Activated CD4-positive, alpha-beta T cell treated with anti-CD3 and anti-CD28 coated beads for 36 hours (primary cell): ENCODE measurements at regions of chr14 and their contacts with region 1.

Region 1: GRCh38 chr14:63388763-63389431 is 70.2 kb upstream of the GPHB5 start:
- DNase-seq: peak; percentile 79
- ATAC-seq: peak; percentile 91
- H3K4me3 Mint-ChIP-seq: no peak overlapping the region
- H3K27ac Mint-ChIP-seq: no peak overlapping the region
- H3K4me1 Mint-ChIP-seq: peaks cover under 1% of the 10 kb centered on the region
- H3K27me3 Mint-ChIP-seq: no peaks in the 10 kb centered on the region

Region 2: DNA sequence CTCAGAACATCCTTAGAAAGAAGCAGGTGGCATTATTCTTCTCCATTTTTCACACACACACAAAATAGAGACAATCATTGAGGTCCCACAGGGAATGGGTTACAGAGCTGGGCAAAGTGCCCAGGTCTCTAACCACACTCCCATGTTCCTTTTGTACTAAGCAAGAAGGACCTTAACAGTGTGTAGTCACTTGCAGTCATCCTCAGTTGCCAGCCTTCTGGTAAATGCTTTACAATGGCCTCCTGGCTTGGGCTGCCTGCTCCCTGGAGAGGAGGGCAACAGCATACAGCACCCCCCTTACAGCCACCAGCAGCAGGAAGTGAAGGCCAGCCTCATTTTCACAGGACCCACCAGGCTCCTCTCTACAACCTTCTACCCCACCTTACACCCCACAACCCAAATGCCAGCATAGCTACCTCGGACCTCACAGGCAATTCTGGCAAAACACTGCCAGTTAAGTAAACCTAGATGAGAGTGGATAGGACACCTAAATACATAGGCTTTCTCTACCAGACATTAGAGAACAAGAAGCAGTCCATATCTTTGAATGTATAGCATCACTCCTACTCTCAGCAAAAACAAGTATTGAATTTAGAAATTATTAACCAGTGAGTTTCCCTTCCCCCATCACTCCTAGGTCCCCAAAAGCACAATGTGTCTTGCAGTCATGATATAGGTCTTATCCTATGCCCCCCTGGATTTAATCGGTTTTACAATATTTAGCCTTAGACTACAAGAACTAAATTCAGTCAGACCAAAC is 66.1 kb after region 1 on chr14:
- CTCF ChIA-PET with region 1: no interaction called
- POLR2A ChIA-PET with region 1: no interaction called
- intact Hi-C with region 1: no loop called
- DNase-seq: peak; percentile 8
- ATAC-seq: no peak
- H3K4me3 Mint-ChIP-seq: no peak overlapping the region
- H3K27ac Mint-ChIP-seq: no peak overlapping the region
- H3K4me1 Mint-ChIP-seq: peaks cover 19% of the 10 kb centered on the region
- H3K27me3 Mint-ChIP-seq: no peaks in the 10 kb centered on the region

Region 3: GRCh38 chr14:63543000-63543825 is 154.3 kb after region 1 on chr14 and contains the start of gene PPP2R5E:
- CTCF ChIA-PET with region 1: interaction called, 11 read pairs
- POLR2A ChIA-PET with region 1: no interaction called
- intact Hi-C with region 1: loop called (anchors 2 kb)
- DNase-seq: peak; percentile 98
- ATAC-seq: peak; percentile 99
- H3K4me3 Mint-ChIP-seq: peak within 1 kb of the TSS; percentile 86
- H3K27ac Mint-ChIP-seq: peak within 1 kb of the TSS; percentile 85
- H3K4me1 Mint-ChIP-seq: peaks cover 26% of the 10 kb centered on the region
- H3K27me3 Mint-ChIP-seq: no peaks in the 10 kb centered on the region
- total RNA-seq, gene PPP2R5E: 38.4 to 40.4 TPM

Region 4: DNA sequence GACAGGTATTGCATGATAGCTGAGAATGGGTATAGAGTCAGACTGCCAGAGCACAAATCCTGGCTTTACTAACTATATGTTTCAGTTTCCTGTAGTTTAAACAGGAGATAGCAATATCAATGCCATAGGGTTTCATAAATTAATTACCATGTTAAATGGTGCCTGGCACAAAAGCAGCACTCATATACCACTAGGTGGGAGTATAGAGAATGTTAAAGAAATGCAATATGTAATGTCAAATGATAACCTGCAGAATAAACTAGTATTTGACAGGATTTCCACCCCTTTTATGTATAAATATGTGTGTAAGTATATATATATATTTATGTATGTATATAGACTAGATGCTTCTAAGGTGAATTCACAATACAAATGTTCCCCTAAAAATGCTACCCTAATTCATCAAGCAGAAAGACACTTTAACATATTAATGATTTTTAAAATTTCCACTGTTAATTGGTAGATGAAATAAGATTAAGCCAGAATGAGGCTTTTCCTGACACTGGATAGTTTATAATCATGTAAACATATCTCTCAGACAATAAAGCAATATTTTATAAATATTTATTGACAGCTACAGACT is 244.1 kb after region 1 on chr14:
- CTCF ChIA-PET with region 1: no interaction called
- POLR2A ChIA-PET with region 1: no interaction called
- intact Hi-C with region 1: loop called (anchors 2 to 5 kb)
- DNase-seq: no peak
- ATAC-seq: peak; percentile 69
- H3K4me3 Mint-ChIP-seq: no peak overlapping the region
- H3K27ac Mint-ChIP-seq: no peak overlapping the region
- H3K4me1 Mint-ChIP-seq: peaks cover 37% of the 10 kb centered on the region
- H3K27me3 Mint-ChIP-seq: no peaks in the 10 kb centered on the region

Region 5: GRCh38 chr14:63770187-63770807 is 381.4 kb after region 1 on chr14:
- CTCF ChIA-PET with region 1: interaction called, 7 read pairs
- POLR2A ChIA-PET with region 1: no interaction called
- intact Hi-C with region 1: loop called (anchors 1 to 2 kb)
- DNase-seq: peak; percentile 64
- ATAC-seq: peak; percentile 78
- H3K4me3 Mint-ChIP-seq: no peak overlapping the region
- H3K27ac Mint-ChIP-seq: no peak overlapping the region
- H3K4me1 Mint-ChIP-seq: peaks cover 2% of the 10 kb centered on the region
- H3K27me3 Mint-ChIP-seq: no peaks in the 10 kb centered on the region